Mucosa of descending colon (tissue), 3 donors: ENCODE measurements at regions of chr16 and their contacts with region 1.

Region 1: GRCh38 chr16:70395345-70395901 is 43.5 kb downstream of the ST3GAL2 start:
- DNase-seq: peak; percentile 79 to 92 (median 87)
- ATAC-seq: peak; percentile 95
- H3K4me3 ChIP-seq: no peak overlapping the region
- H3K4me1 ChIP-seq: peaks cover 2% of the 10 kb centered on the region
- CTCF ChIP-seq: peak; percentile 64

Region 2: GRCh38 chr16:70454222-70455034 is 59.0 kb after region 1 on chr16 and contains the start of gene FCSK:
- intact Hi-C with region 1: loop called in 1 of 2 experiments (anchors 10 kb)
- DNase-seq: peak; percentile 75 to 83 (median 82)
- ATAC-seq: peak; percentile 93
- H3K4me3 ChIP-seq: peak within 1 kb of the TSS; percentile 89
- H3K4me1 ChIP-seq: no peaks in the 10 kb centered on the region
- CTCF ChIP-seq: no peak
- total RNA-seq, gene FCSK: 30.1 to 47.4 (median 33.0) TPM

Region 3: GRCh38 chr16:70460737-70461261 is 65.4 kb after region 1 on chr16:
- intact Hi-C with region 1: loop called (anchors 10 kb)
- DNase-seq: no peak
- ATAC-seq: peak; percentile 32
- H3K4me3 ChIP-seq: no peak overlapping the region
- H3K4me1 ChIP-seq: no peaks in the 10 kb centered on the region
- CTCF ChIP-seq: no peak

Region 4: DNA sequence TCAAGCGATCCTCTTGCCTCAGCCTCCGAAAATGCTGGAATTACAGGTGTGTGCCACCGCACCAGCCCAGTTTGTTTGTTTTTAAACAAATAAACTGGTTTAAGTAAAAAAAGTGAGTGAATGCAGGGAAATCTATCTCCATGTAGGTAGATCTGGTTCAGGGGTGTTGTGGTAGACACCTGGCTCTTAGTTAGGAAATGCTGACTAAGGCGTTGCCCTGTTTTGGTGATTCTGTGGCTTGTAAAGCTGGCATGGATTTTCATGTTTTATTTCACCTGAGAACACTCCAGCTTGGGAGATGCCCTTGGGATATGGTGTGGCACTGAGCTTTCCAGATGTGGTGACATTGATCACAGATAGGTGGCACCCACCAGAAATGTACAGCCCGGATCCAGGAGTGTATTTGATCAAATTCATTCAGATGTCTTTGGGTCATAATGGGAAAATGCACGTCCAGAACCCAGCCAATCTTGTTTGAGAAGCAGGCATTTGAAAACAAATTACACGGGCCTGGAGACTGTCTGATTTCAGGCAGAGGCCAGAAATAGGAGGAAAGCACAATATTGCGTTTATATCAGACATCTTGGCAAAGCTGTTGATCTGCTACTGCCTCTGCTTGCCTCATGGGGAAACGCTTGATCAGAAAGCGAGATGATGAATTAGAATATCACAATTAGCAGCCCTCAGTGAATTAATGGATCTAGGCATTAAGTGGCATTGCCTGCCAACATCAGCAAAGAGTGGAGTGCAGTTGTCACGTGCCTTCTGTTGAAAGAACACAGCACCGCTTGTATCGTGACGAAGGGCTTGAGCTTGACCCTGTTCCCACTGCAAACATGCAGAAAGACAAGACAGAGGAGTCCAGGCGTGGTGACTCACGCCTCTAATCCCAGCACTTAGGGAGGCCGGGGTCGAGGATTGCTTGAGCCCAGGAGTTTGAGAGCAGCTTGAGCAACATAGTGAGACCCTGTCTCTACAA is 243.7 kb after region 1 on chr16:
- intact Hi-C with region 1: no loop called
- DNase-seq: no peak
- ATAC-seq: peak; percentile 54
- H3K4me3 ChIP-seq: no peak overlapping the region
- H3K4me1 ChIP-seq: no peaks in the 10 kb centered on the region
- CTCF ChIP-seq: no peak